Activated B cell treated with CpG ODN at 0.5 μM for 24 hours (primary cell): ENCODE measurements at regions of chr9 and their contacts with region 1.

Region 1: GRCh38 chr9:14693206-14693861 is at the start of gene ZDHHC21:
- DNase-seq: peak; percentile 60
- ATAC-seq: peak; percentile 75
- H3K4me3 Mint-ChIP-seq: peak within 1 kb of the TSS; percentile 94
- H3K27ac Mint-ChIP-seq: peak within 1 kb of the TSS; percentile 93
- H3K4me1 Mint-ChIP-seq: peaks cover 51% of the 10 kb centered on the region
- H3K27me3 Mint-ChIP-seq: no peaks in the 10 kb centered on the region
- CTCF ChIP-seq: no peak
- total RNA-seq, gene ZDHHC21: 22.6 and 29.4 TPM in 2 replicates

Region 2: DNA sequence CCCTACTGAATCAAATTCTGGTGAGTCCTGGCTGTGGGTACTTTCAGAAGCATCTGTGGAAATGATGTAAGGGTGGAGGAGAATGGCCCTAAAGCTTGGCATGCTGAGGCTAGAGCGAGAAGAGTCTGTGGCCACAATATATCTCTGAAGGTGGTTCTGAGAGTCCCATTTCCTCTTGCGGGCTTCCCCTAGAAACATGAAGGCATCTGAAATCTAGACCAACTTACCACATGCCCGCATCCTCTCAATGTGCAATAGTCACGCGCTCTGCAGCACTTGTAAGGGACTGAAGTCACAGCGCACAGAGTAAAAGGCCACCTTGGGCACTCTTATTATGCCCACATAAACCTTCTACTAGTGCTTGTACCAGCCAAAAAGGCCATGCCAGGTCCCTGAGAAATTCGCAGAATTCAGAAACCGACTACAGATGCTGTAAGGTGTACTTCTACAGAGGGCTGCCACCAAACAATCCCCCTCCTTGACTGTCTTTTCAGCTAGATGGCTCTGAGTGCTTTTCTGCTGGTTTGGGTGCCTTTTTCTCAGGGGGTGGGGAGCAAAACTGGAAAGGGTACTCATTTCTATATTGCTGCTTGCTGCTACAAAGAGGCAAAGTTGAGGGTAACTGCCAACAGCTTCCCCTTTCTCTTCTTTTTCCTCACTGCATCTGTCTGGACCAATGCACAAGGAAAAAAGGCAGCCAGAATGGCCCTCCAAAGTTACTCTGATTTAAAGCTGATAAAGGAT is 107.4 kb before region 1 on chr9:
- CTCF ChIA-PET with region 1: no interaction called
- POLR2A ChIA-PET with region 1: no interaction called
- intact Hi-C with region 1: loop called (anchors 10 kb)
- DNase-seq: no peak
- ATAC-seq: peak; percentile 94
- H3K4me3 Mint-ChIP-seq: no peak overlapping the region
- H3K27ac Mint-ChIP-seq: peak overlapping the region; percentile 30
- H3K4me1 Mint-ChIP-seq: peaks cover 14% of the 10 kb centered on the region
- H3K27me3 Mint-ChIP-seq: no peaks in the 10 kb centered on the region
- CTCF ChIP-seq: no peak

Region 3: GRCh38 chr9:14661421-14662059 is 31.8 kb before region 1 on chr9:
- CTCF ChIA-PET with region 1: interaction called, 8 read pairs
- POLR2A ChIA-PET with region 1: no interaction called
- intact Hi-C with region 1: loop called (anchors 1 kb)
- DNase-seq: no peak
- ATAC-seq: no peak
- H3K4me3 Mint-ChIP-seq: no peak overlapping the region
- H3K27ac Mint-ChIP-seq: no peak overlapping the region
- H3K4me1 Mint-ChIP-seq: peaks cover 2% of the 10 kb centered on the region
- H3K27me3 Mint-ChIP-seq: no peaks in the 10 kb centered on the region
- CTCF ChIP-seq: no peak

Region 4: DNA sequence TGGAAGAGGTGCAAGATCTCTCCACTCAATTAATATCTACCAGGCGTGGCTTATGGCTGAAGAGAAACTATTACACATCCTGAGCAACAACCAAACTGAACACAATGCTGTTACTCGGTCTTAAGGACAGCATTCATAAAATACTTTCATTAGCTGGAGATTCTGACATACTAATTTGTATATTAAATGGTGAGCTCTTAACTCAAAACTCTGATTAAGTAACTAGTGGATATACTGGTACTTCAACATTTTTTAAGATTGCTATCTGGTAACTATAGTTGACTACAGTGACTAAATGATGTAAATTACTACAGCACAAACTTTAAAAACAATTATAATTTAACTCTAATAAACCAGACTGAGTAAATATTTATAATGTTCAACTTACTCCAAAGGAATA is 15.9 kb before region 1 on chr9:
- CTCF ChIA-PET with region 1: no interaction called
- POLR2A ChIA-PET with region 1: no interaction called
- intact Hi-C with region 1: no loop called
- DNase-seq: no peak
- ATAC-seq: no peak
- H3K4me3 Mint-ChIP-seq: no peak overlapping the region
- H3K27ac Mint-ChIP-seq: no peak overlapping the region
- H3K4me1 Mint-ChIP-seq: peaks cover 44% of the 10 kb centered on the region
- H3K27me3 Mint-ChIP-seq: no peaks in the 10 kb centered on the region
- CTCF ChIP-seq: no peak

Region 5: DNA sequence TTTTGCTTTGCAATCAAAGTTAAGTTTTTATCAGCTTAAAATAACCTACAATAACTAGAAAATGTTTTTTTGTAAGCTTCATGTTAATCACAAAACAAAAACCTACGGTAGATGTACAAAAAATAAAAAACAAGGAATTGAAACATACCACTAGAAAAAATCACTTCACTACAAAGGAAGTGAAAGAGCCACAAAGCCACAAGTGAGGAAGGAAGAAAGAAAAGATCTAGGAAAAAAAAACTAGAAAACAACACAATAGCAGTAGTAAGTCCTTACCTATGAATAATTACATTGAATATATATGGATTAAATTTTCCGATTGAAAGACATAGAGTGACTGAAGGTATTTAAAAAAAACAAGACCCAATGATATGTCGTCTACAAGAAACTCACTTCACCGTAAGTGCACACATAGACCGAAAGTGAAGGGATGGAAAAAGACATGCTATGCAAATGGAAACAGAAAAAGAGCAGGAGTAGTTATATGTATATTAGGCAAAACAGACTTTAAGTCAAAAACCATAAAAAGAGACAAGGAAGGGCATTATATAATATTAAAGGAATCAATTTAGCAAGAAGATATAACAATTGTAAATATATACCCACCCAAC is 13.3 kb after region 1 on chr9:
- CTCF ChIA-PET with region 1: no interaction called
- POLR2A ChIA-PET with region 1: interaction called, 8 read pairs
- intact Hi-C with region 1: loop called (anchors 1 kb)
- DNase-seq: no peak
- ATAC-seq: peak; percentile 45
- H3K4me3 Mint-ChIP-seq: peak overlapping the region; percentile 30
- H3K27ac Mint-ChIP-seq: no peak overlapping the region
- H3K4me1 Mint-ChIP-seq: peaks cover 26% of the 10 kb centered on the region
- H3K27me3 Mint-ChIP-seq: peaks cover 10% of the 10 kb centered on the region
- CTCF ChIP-seq: no peak